ENCODE measurements at regions of chr19 and their contacts with region 1.

Region 1: GRCh38 chr19:12139885-12140547 is at the start of gene ZNF20:
- DNase-seq: peak; percentile 98
- ATAC-seq: peak; percentile 94
- H3K4me3 ChIP-seq: peak within 1 kb of the TSS; percentile 95
- H3K27ac ChIP-seq: peak within 1 kb of the TSS; percentile 45
- H3K4me1 ChIP-seq: peaks cover 14% of the 10 kb centered on the region
- H3K27me3 ChIP-seq: no peaks in the 10 kb centered on the region
- CTCF ChIP-seq: no peak
- total RNA-seq, gene ZNF20: 3.9 and 5.6 TPM in 2 replicates

Region 2: DNA sequence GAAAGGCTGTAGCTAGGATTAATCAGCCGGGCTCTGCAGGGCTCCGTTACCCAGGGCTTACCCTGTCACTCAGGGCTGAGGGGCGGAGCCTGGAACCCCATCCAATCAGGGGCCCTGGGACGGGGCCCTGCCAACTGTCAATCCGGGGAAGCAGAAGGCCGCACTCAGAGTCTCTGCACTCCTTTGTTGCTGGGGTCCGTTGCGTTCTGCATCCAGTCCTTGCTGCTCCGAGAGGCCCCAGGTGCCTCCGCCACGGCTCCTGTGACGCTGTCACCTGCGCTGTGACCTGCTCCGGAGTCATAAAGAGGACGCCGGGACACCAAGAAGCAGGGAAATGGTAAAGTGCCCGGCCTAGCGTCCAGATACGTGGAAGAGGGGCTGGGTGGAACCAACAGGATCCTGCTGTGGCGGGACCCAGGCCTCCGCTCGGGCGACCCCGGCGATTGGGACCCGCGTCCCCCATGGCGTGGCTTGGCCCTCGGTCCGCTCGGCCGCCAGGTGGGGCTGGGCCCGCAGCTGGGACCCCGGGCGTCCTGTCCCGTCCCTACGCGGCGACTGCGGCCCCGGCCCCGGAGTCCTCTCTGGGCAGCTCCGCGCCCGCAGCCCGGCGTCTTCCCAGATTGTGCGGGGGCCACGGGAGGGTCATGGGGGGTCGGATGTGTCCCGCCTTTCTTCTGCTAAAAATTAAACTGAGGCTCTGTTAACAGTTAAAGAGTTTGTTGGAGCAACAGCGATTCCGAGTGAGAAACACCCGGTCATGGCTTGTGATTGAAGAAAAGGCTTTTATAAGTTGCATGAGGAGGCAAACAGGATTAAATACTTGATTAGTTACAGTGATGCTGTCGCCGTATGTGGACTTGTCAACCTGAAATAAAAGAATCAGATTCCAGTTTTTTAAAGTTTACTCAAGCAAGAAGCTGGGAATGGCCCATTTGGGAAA is 341.4 kb before region 1 on chr19 and contains the start of gene ZNF491:
- CTCF ChIA-PET with region 1: interaction called, 23 read pairs
- POLR2A ChIA-PET with region 1: no interaction called
- intact Hi-C with region 1: loop called (anchors 1 kb)
- DNase-seq: peak; percentile 90
- ATAC-seq: peak; percentile 97
- H3K4me3 ChIP-seq: peak within 1 kb of the TSS; percentile 84
- H3K27ac ChIP-seq: no peak within 1 kb of the TSS
- H3K4me1 ChIP-seq: peaks cover 11% of the 10 kb centered on the region
- H3K27me3 ChIP-seq: no peaks in the 10 kb centered on the region
- CTCF ChIP-seq: peak; percentile 57
- total RNA-seq, gene ZNF491: 0.17 and 0.47 TPM in 2 replicates

Region 3: DNA sequence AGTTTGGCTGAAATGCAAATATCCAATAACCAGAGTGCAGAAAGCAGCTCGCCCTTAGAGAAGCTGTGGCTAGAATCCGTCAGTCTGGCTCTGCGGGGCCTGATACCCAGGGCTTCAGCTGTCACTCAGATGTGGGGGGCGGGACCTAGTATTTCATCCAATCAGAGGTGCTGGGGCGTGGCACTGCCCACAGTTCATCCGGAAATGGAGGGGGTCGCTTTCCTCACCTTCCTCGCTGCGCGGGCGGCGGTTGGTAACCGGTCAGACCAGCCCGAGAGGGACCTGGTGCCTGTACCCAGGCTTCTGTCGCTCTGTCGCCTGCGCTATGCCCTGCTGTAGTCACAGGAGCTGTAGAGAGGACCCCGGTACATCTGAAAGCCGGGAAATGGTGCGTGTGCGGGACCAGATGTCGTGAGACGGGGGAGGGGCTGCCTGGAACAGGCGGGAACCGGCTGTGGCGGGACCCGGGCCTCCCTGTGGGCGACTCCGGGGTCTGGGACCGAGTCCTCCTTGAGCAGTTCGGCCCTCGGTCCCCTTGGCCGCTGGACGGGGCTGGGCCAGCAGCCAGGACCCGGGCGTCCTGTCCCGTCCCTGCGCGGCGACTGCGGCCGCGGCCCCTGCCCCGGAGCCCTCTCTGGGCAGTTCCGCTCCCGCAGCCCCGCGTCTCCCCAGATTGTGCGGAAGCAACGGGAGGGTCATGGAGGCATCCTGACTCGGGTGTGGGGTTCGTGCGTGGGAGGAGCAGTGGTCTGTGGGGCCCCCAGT is 214.9 kb before region 1 on chr19 and contains the start of gene ZNF700:
- CTCF ChIA-PET with region 1: interaction called, 12 read pairs
- POLR2A ChIA-PET with region 1: interaction called, 4 read pairs
- intact Hi-C with region 1: loop called (anchors 1 kb)
- DNase-seq: peak; percentile 98
- ATAC-seq: peak; percentile 92
- H3K4me3 ChIP-seq: peak within 1 kb of the TSS; percentile 83
- H3K27ac ChIP-seq: peak within 1 kb of the TSS; percentile 53
- H3K4me1 ChIP-seq: peaks cover 4% of the 10 kb centered on the region; the same call in 1 of the 2 replicates
- H3K27me3 ChIP-seq: no peaks in the 10 kb centered on the region
- CTCF ChIP-seq: no peak
- total RNA-seq, gene ZNF700: 6.7 and 9.5 TPM in 2 replicates

Region 4: GRCh38 chr19:11964858-11965645 is 175.0 kb before region 1 on chr19 and contains the start of gene ZNF763:
- CTCF ChIA-PET with region 1: no interaction called
- POLR2A ChIA-PET with region 1: no interaction called
- intact Hi-C with region 1: loop called (anchors 1 kb)
- DNase-seq: peak; percentile 75
- ATAC-seq: peak; percentile 93
- H3K4me3 ChIP-seq: peak within 1 kb of the TSS; percentile 68
- H3K27ac ChIP-seq: no peak within 1 kb of the TSS
- H3K4me1 ChIP-seq: no peaks in the 10 kb centered on the region
- H3K27me3 ChIP-seq: no peaks in the 10 kb centered on the region
- CTCF ChIP-seq: no peak
- total RNA-seq, gene ZNF763: 0.33 TPM in 1 of 2 replicates, not detected in the other

Region 5: DNA sequence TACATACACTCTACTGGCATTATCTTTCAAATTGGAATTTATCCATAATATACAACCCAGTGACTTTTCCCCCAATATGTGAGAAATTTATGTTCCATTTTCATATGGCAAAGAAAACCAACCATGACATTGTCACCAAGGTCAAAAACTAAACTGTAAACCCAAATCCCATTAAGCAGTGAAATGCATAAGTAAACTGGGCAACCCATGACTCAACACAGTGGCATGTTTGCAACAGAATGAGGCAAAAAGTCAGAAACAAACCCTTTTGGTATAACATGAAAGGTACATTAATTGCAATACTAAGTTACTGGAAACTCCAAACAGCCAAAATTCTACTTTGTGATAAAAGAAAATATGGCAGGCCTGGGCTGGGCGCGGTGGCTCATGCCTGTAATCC is 92.1 kb before region 1 on chr19:
- CTCF ChIA-PET with region 1: no interaction called
- POLR2A ChIA-PET with region 1: no interaction called
- intact Hi-C with region 1: no loop called
- DNase-seq: peak; percentile 45
- ATAC-seq: no peak
- H3K4me3 ChIP-seq: no peak overlapping the region
- H3K27ac ChIP-seq: no peak overlapping the region
- H3K4me1 ChIP-seq: 0 out of 2 replicates have a peak, but pooled peaks cover 4% of the 10 kb centered on the region
- H3K27me3 ChIP-seq: no peaks in the 10 kb centered on the region
- CTCF ChIP-seq: no peak

Region 6: GRCh38 chr19:12064590-12065538 is 75.2 kb before region 1 on chr19 and contains the start of gene ZNF844:
- CTCF ChIA-PET with region 1: interaction called, 39 read pairs
- POLR2A ChIA-PET with region 1: interaction called, 3 read pairs
- intact Hi-C with region 1: no loop called
- DNase-seq: peak; percentile 89
- ATAC-seq: peak; percentile 95
- H3K4me3 ChIP-seq: peak within 1 kb of the TSS; percentile 90
- H3K27ac ChIP-seq: peak within 1 kb of the TSS; percentile 10
- H3K4me1 ChIP-seq: no peaks in the 10 kb centered on the region
- H3K27me3 ChIP-seq: no peaks in the 10 kb centered on the region
- CTCF ChIP-seq: no peak
- total RNA-seq, gene ZNF844: 4.0 and 4.7 TPM in 2 replicates

Region 7: DNA sequence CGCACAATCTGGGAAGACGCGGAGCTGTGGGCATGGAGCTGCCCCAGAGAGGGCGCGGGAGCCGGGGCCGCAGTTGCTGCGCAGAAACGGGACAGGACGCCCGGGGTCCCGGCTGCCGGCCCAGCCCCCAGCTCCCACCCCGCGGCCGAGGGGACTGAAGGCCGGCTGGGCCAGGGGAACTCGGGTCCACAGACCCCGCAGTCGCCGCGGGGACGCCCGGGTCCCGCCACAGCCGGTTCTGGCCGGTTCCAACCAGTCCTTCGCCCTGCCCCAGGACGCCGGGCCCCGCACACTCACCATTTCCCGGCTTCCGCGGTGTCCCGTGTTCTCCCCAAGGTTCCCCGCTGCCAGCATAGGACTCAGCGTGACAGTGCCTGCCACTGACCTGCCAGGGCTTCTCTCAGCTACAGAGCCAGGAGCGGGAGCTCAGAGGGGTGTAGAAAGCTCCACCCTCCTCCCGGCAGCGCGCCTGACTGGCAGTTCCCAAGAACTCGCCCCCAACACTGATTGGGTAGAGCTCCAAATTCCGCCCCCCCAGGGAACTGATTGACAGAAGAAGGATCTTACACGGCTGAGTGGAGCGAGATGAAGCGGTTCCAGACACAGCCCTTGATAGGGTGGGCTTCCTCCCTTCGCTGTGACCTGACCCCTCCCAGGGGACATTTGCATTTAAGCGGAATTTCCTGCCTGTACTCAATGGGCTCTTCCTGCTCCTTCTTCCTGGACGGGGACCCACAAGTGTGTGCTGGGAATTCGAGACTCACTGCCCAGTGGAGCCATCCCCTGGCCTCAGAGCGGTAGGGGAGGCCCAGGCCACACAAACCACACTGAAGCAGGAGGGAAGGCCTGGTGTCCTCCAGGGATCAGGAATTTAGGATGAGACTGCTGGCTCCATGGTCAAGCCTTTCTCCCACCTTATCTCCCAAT is 225.5 kb after region 1 on chr19 and contains the start of gene ZNF442:
- CTCF ChIA-PET with region 1: no interaction called
- POLR2A ChIA-PET with region 1: no interaction called
- intact Hi-C with region 1: loop called (anchors 1 kb)
- DNase-seq: peak; percentile 96
- ATAC-seq: peak; percentile 97
- H3K4me3 ChIP-seq: peak within 1 kb of the TSS; percentile 82
- H3K27ac ChIP-seq: no peak within 1 kb of the TSS
- H3K4me1 ChIP-seq: no peaks in the 10 kb centered on the region; the same call in 1 of the 2 replicates
- H3K27me3 ChIP-seq: no peaks in the 10 kb centered on the region
- CTCF ChIP-seq: peak; percentile 64
- total RNA-seq, gene ZNF442: 0.63 and 1.1 TPM in 2 replicates